IMR-90 (cell line): ENCODE measurements at regions of chr13 and their contacts with region 1.

Region 1: DNA sequence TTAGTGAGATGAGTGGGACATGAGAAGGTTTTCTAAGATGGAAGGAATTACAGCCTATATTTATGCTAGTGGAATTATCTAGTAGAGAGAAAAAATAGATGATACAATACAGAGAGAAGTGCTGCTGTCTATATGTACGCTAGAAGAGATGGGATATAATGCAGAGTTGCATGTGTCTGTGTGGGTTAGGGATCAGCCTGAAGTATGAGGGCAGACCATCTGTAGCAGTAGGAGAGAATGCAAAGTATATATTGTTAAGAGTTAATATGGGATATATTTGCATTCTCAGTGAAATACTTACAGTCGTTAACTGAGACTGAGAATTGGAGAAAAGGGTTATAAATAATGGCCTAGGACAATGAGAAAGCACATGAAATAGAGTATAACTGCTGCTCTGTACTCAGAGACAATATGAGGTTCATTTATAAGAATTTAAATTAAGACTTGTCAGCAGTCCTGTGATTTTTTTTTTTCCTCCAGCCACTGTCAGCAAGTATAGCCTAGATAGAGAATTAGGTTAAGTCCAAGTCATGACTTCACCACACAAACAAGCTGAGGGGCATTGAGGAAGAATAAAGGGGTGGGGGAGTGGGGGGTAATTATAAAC is 77.8 kb downstream of the SLITRK1 start:
- DNase-seq: no peak
- ATAC-seq: no peak
- H3K4me3 ChIP-seq: no peak overlapping the region
- H3K27ac ChIP-seq: no peak overlapping the region
- H3K4me1 ChIP-seq: no peaks in the 10 kb centered on the region
- H3K27me3 ChIP-seq: no peaks in the 10 kb centered on the region
- CTCF ChIP-seq: no peak
- POLR2A ChIP-seq: no peak
- RAD21 ChIP-seq: no peak

Region 2: GRCh38 chr13:84237143-84237542 is 432.7 kb after region 1 on chr13:
- CTCF ChIA-PET with region 1: no interaction called
- POLR2A ChIA-PET with region 1: no interaction called
- dilution Hi-C with region 1: no loop called
- in situ Hi-C with region 1: no loop called
- intact Hi-C with region 1: loop called (anchors 10 kb)
- DNase-seq: no peak
- ATAC-seq: no peak
- H3K4me3 ChIP-seq: no peak overlapping the region
- H3K27ac ChIP-seq: no peak overlapping the region
- H3K4me1 ChIP-seq: no peaks in the 10 kb centered on the region
- H3K27me3 ChIP-seq: no peaks in the 10 kb centered on the region
- CTCF ChIP-seq: no peak
- POLR2A ChIP-seq: no peak
- RAD21 ChIP-seq: no peak